IMR-90 (cell line): ENCODE measurements at regions of chr7 and their contacts with region 1.

Region 1: GRCh38 chr7:22433710-22434460 is 66.1 kb downstream of the STEAP1B start:
- DNase-seq: peak; percentile 47
- ATAC-seq: no peak; the same call in 1 of the 2 replicates
- H3K4me3 ChIP-seq: no peak overlapping the region
- H3K27ac ChIP-seq: no peak overlapping the region
- H3K4me1 ChIP-seq: peaks cover 1% of the 10 kb centered on the region; the same call in 1 of the 2 replicates
- H3K27me3 ChIP-seq: no peaks in the 10 kb centered on the region
- CTCF ChIP-seq: no peak
- POLR2A ChIP-seq: no peak
- RAD21 ChIP-seq: no peak

Region 2: GRCh38 chr7:22173685-22174573 is 260.0 kb before region 1 on chr7:
- CTCF ChIA-PET with region 1: no interaction called
- POLR2A ChIA-PET with region 1: no interaction called
- dilution Hi-C with region 1: no loop called
- in situ Hi-C with region 1: no loop called
- intact Hi-C with region 1: no loop called
- DNase-seq: no peak
- ATAC-seq: no peak
- H3K4me3 ChIP-seq: no peak overlapping the region
- H3K27ac ChIP-seq: no peak overlapping the region
- H3K4me1 ChIP-seq: no peaks in the 10 kb centered on the region
- H3K27me3 ChIP-seq: peaks cover 2% of the 10 kb centered on the region; the same call in 1 of the 2 replicates
- CTCF ChIP-seq: no peak
- POLR2A ChIP-seq: no peak
- RAD21 ChIP-seq: no peak

Region 3: GRCh38 chr7:22210967-22211366 is 222.9 kb before region 1 on chr7:
- CTCF ChIA-PET with region 1: no interaction called
- POLR2A ChIA-PET with region 1: interaction called, 12 read pairs
- dilution Hi-C with region 1: no loop called
- in situ Hi-C with region 1: no loop called
- intact Hi-C with region 1: no loop called
- DNase-seq: no peak
- ATAC-seq: no peak
- H3K4me3 ChIP-seq: no peak overlapping the region
- H3K27ac ChIP-seq: no peak overlapping the region
- H3K4me1 ChIP-seq: no peaks in the 10 kb centered on the region
- H3K27me3 ChIP-seq: peaks cover 2% of the 10 kb centered on the region; the same call in 1 of the 2 replicates
- CTCF ChIP-seq: no peak
- POLR2A ChIP-seq: no peak
- RAD21 ChIP-seq: no peak

Region 4: DNA sequence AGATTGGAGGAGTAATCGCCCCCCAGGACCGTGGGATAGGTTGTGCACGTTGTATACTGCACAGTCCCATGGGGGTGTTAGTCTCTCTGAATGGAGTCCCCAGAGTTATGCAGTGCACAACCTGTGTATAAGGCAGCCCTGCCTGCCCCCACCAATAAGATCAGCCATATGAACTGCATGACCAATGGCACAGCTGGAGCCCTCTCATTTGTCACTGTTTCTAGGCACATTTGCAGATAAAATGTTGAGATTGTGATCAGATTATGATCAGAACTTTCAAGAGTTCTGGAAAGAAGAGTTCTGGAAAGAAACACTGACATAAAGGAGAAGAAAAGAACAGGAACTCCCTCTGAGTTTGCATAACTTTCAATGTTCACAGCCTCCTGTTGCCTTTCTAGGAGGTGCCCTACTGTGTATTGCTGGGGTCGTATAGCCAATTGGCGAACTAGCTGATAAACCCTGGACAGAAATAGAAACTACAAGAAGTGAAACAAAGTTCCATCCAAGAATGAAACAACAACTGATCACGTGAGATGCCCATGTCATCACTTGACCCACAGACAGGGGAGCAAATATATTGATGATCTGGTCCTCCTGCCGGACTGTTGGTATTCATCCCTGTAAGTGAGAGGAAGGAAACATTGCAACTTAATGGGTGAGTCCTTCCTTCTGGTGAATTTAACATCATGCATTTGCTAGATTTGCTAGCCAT is 438.4 kb after region 1 on chr7:
- CTCF ChIA-PET with region 1: no interaction called
- POLR2A ChIA-PET with region 1: no interaction called
- dilution Hi-C with region 1: no loop called
- in situ Hi-C with region 1: no loop called
- intact Hi-C with region 1: no loop called
- DNase-seq: no peak
- ATAC-seq: no peak
- H3K4me3 ChIP-seq: no peak overlapping the region
- H3K27ac ChIP-seq: no peak overlapping the region
- H3K4me1 ChIP-seq: peaks cover 11% of the 10 kb centered on the region
- H3K27me3 ChIP-seq: no peaks in the 10 kb centered on the region
- CTCF ChIP-seq: no peak
- POLR2A ChIP-seq: no peak
- RAD21 ChIP-seq: no peak